Psoas muscle (tissue), 8 donors: ENCODE measurements at regions of chr7 and their contacts with region 1.

Region 1: GRCh38 chr7:30308389-30308788 is 24.0 kb downstream of the ZNRF2 start:
- DNase-seq: no peak
- ATAC-seq: peak in 2 of 4 donors; percentile 37 to 39
- H3K4me3 ChIP-seq: peak overlapping the region; percentile 17
- H3K27ac ChIP-seq: no peak overlapping the region
- H3K4me1 ChIP-seq: peaks cover 77% of the 10 kb centered on the region
- H3K27me3 ChIP-seq: no peaks in the 10 kb centered on the region
- CTCF ChIP-seq: no peak

Region 2: GRCh38 chr7:30225863-30226613 is 82.4 kb before region 1 on chr7:
- intact Hi-C with region 1: no loop called
- DNase-seq: peak; percentile 67 to 87
- ATAC-seq: peak; percentile 96 to 98 (median 96)
- H3K4me3 ChIP-seq: peak overlapping the region; percentile 17
- H3K27ac ChIP-seq: peak overlapping the region; percentile 95
- H3K4me1 ChIP-seq: peaks cover 24% of the 10 kb centered on the region
- H3K27me3 ChIP-seq: no peaks in the 10 kb centered on the region
- CTCF ChIP-seq: no peak

Region 3: DNA sequence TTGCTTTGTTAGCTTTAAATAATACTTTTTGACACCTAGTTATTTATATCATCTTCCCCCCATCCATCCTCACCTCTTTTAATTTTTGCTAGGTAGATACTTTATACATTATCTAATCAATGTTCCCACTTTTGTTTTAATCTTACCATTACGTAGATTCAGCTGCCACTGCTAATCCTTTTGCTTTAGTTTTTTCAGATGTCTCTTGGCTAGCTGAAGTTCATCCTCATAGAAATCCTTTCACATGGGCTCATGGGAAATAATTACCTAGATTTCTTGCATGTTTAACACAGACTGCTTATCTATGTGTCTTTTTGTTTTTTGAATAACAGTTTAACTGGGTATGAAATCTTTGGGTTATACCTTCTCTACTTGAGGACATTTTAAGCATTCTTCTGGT is 36.1 kb after region 1 on chr7:
- intact Hi-C with region 1: loop called in 1 of 2 experiments (anchors 5 kb)
- DNase-seq: no peak
- ATAC-seq: no peak
- H3K4me3 ChIP-seq: no peak overlapping the region
- H3K27ac ChIP-seq: no peak overlapping the region
- H3K4me1 ChIP-seq: peaks cover 17% of the 10 kb centered on the region
- H3K27me3 ChIP-seq: no peaks in the 10 kb centered on the region
- CTCF ChIP-seq: no peak

Region 4: DNA sequence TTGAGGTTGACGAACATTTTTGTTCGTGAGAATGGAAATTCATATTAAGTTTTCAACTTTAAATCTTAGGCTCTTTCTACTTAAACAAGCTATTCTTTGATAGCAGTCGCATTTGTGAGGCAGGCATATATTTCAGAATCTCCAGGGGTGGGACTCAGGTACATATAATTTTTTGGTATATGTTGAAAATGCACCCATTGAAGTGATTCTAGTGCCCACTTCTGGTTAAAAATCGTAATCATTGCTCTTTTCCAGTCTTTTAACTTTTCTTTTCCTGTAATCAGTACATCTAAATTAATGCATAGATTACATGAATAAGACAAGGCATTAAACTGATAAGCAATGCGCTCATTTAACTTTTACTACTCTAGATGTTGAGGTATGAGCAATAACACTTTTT is 43.8 kb after region 1 on chr7:
- intact Hi-C with region 1: loop called in 1 of 2 experiments (anchors 10 kb)
- DNase-seq: no peak
- ATAC-seq: no peak
- H3K4me3 ChIP-seq: no peak overlapping the region
- H3K27ac ChIP-seq: no peak overlapping the region
- H3K4me1 ChIP-seq: peaks cover 31% of the 10 kb centered on the region
- H3K27me3 ChIP-seq: no peaks in the 10 kb centered on the region
- CTCF ChIP-seq: no peak

Region 5: DNA sequence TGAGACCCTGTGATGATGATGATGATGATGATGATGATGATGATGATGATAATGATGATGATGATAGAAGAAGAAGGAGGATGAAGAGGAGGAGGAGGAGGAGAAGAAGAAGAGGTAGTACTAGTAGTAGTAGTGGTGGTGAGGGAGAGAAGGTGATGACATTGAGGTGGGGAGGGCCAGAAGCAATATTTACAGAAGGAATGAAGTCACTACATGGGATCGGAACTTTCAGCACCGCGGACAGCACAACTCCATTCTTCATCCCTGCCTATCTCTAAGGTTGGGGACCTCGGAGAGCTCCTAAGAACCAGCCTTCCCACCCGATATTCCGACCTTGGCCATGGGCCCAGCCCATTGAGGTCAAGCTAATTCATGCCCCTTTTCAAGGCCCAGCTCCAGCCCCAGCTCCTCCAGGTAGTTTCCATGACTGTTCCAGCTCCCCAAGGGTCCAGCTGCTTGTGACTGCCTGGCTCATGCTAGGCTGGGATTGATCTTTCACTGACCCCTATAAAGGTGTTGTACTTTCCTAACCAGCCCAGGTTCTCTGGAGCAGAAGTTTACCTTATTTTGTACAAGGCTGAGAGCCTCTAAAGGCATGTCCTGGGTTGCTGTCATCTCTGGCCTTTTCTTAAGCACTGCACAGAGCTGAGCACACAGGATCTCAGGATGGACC is 363.5 kb after region 1 on chr7:
- intact Hi-C with region 1: no loop called
- DNase-seq: no peak
- ATAC-seq: peak in 1 of 4 donors; percentile 39
- H3K4me3 ChIP-seq: no peak overlapping the region
- H3K27ac ChIP-seq: no peak overlapping the region
- H3K4me1 ChIP-seq: no peaks in the 10 kb centered on the region
- H3K27me3 ChIP-seq: no peaks in the 10 kb centered on the region
- CTCF ChIP-seq: no peak